Ascending aorta (tissue), 2 donors: ENCODE measurements at regions of chr7 and their contacts with region 1.

Region 1: DNA sequence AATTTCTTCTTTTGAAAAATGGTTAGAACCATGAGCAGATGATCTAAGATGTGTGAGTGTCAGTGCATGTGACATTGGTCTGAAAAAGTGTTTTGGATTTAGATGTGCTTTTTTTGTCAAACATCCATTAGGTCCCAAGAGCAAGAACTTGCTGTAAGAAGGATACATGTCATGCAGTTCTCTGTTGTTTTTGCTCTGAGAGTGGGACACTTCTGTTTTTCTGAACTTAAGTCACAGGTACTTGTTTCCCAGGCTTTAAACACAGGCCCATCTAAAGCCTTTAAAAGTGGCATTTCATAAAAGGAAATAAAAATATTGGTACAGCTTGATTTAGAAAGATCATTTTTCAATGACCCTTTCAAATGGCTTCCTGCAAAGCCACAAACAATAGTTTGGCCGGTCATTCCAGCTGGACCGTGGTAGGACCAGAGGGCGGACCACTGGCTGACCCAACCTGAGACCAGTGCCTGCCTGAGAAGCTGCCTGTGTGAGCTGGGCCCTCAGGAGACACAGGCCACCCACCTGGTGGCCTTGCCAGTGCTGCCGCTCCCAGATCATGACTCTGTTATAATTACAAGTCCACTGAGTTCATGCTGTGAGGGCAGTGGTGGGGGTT is 92.7 kb downstream of the EEPD1 start:
- DNase-seq: no peak
- H3K4me3 ChIP-seq: no peak overlapping the region
- H3K27ac ChIP-seq: peak overlapping the region; percentile 87 to 88
- H3K4me1 ChIP-seq: peaks cover 4 to 17% of the 10 kb centered on the region in 2 donors
- H3K27me3 ChIP-seq: no peaks in the 10 kb centered on the region
- CTCF ChIP-seq: no peak

Region 2: DNA sequence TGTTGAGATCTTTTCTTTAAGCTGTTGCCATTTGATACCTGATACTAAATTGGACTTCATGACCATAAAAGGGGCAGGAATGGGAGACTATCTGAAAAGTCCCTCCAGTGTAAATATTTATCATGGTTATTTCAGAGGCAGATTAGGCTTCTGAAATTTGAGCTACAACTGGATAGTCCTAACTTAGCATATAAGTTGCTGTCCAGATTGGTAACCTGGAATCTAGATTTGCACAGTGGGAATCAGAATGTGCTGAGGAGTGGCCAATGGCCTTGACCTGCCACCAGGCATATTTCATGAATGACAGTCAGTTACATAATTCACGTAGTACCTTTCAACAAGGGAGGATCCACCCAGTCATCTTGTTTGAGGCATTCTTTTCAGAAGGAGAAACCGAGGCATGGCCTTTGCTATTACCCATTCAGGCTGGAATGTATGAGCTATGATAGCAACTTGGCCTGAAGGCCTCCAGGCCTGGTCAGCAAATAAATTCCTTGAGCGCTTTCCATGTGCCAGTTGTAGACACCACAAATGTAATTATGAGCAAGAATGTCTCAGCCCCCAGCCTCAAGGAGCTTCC is 12.7 kb before region 1 on chr7:
- intact Hi-C with region 1: loop called (anchors 2 kb)
- DNase-seq: no peak
- H3K4me3 ChIP-seq: no peak overlapping the region
- H3K27ac ChIP-seq: peak overlapping the region; percentile 59 to 73
- H3K4me1 ChIP-seq: peaks cover 10 to 18% of the 10 kb centered on the region in 2 donors
- H3K27me3 ChIP-seq: no peaks in the 10 kb centered on the region
- CTCF ChIP-seq: no peak